ENCODE measurements at regions of chr6 and their contacts with region 1.

Region 1: GRCh38 chr6:35206346-35206745 is 7.4 kb upstream of the SCUBE3 start:
- DNase-seq: no peak
- H3K4me3 ChIP-seq: no peak overlapping the region
- H3K4me3 Mint-ChIP-seq: no peak overlapping the region
- H3K27ac ChIP-seq: no peak overlapping the region
- H3K27ac Mint-ChIP-seq: peak overlapping the region in 1 of 8 donors; percentile 7
- H3K4me1 ChIP-seq: no peaks in the 10 kb centered on the region
- H3K4me1 Mint-ChIP-seq: no peaks in the 10 kb centered on the region
- H3K27me3 ChIP-seq: peaks cover 9% of the 10 kb centered on the region
- H3K27me3 Mint-ChIP-seq: peaks cover 31 to 80% of the 10 kb centered on the region in 2 donors

Region 2: DNA sequence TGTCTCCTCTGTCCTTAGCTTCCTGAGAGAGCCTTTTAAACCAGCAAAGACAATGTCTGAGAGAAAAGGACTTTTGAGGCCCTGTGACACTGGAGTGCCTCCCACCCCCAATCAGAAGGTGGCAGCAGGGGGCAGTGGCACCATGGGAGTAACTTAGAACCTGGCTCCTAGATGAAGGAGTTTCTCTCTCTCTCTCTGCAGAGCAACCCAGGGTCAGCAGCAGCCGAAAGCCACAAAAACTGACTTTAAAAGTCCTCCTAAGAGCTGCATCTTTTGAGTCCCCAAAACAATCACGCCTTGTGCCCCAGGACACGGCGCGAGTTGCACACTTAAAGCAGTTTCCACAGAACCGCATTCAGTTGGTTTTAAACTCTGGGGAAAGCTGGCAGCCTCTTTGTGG is 59.9 kb before region 1 on chr6:
- CTCF ChIA-PET with region 1: interaction called, 12 read pairs
- POLR2A ChIA-PET with region 1: no interaction called
- DNase-seq: peak in 2 of 5 donors; percentile 10 to 54
- H3K4me3 ChIP-seq: no peak overlapping the region
- H3K4me3 Mint-ChIP-seq: no peak overlapping the region
- H3K27ac ChIP-seq: no peak overlapping the region
- H3K27ac Mint-ChIP-seq: no peak overlapping the region
- H3K4me1 ChIP-seq: no peaks in the 10 kb centered on the region
- H3K4me1 Mint-ChIP-seq: peaks cover 0 to 3% (median 2%) of the 10 kb centered on the region in 3 donors
- H3K27me3 ChIP-seq: no peaks in the 10 kb centered on the region
- H3K27me3 Mint-ChIP-seq: peaks cover 7 to 18% of the 10 kb centered on the region in 2 donors

Region 3: GRCh38 chr6:35161776-35162607 is 44.4 kb before region 1 on chr6:
- CTCF ChIA-PET with region 1: no interaction called
- POLR2A ChIA-PET with region 1: no interaction called
- DNase-seq: no peak
- H3K4me3 ChIP-seq: no peak overlapping the region
- H3K4me3 Mint-ChIP-seq: no peak overlapping the region
- H3K27ac ChIP-seq: no peak overlapping the region
- H3K27ac Mint-ChIP-seq: no peak overlapping the region
- H3K4me1 ChIP-seq: no peaks in the 10 kb centered on the region
- H3K4me1 Mint-ChIP-seq: no peaks in the 10 kb centered on the region
- H3K27me3 ChIP-seq: no peaks in the 10 kb centered on the region
- H3K27me3 Mint-ChIP-seq: peaks cover 18 to 57% of the 10 kb centered on the region in 2 donors

Measured in CD8-positive, alpha-beta memory T cell (primary cell).